ENCODE measurements at regions of chr5 and their contacts with region 1.

Region 1: DNA sequence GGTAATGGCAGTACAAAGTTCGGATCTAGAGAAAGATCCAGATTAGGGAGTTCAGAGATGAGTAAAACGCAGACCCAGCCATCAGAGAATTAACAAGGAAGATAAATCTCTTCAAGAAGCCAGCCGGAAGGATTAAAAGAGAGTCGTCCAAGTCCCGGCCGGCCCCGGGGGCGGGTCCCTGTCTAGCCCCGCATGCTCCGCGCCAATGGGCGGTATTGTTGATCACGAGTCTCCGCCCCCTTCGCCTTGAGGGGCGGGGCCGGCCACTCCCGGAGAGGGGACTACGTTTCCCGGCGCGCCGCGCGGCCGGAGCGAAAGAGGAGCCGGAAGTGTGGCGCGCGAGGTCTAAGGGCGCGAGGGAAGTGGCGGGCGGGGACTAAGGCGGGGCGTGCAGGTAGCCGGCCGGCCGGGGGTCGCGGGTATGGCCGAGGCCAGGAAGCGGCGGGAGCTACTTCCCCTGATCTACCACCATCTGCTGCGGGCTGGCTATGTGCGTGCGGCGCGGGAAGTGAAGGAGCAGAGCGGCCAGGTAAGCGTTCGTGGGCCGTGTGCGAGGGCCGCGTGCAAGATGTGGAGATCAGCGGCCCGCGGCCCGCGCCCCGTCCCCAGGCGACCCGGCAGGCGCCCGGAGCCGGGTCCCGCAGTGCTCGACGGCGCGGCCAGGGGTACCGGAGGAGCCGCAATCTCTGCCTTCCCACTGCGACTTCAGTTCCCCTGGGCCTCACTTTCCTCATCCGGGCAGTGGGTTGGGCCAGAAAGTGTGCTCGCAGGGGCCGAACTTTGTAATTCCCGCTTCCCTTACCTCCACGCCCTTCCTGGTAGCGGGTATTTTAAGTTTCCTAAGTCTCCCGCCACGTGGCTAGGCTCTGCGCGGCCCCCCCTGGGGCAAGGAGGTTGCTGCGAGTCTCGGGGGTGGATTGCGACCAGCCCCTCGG is at the start of gene TCOF1:
- DNase-seq: peak; percentile 96 to 99 (median 97)
- H3K4me3 ChIP-seq: peak within 1 kb of the TSS; percentile 74 to 99 (median 93)
- H3K27ac ChIP-seq: peak within 1 kb of the TSS in 52 of 59 donors; percentile 6 to 86 (median 66)
- H3K27me3 ChIP-seq: no peaks in the 10 kb centered on the region
- CTCF ChIP-seq: peak in 33 of 56 donors; percentile 10 to 63 (median 26)
- total RNA-seq, gene TCOF1: 26.4 to 51.1 (median 35.9) TPM

Region 2: DNA sequence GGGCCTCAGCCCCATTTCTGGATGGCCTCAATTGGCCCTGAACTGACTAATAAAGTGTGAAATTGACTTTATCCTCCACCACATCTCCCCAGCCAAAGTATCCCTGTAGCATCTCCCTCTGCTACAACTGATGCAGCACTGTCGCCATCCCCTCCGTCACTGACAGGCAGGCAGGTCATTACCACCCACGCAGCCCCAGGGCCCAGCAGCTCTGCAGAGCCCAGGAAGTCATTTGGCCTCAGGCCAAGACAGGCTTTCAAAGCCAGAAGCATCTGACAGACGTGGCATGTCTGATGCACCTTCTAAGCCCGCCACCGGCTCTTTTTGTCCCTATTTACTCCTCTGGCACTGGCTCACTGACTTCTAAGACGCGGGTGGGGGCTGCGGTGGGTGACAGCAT is 711.0 kb before region 1 on chr5:
- intact Hi-C with region 1: no loop called
- DNase-seq: peak in 1 of 10 donors; percentile 22
- H3K4me3 ChIP-seq: no peak overlapping the region
- H3K27ac ChIP-seq: no peak overlapping the region
- H3K27me3 ChIP-seq: no peaks in the 10 kb centered on the region
- CTCF ChIP-seq: no peak

Region 3: DNA sequence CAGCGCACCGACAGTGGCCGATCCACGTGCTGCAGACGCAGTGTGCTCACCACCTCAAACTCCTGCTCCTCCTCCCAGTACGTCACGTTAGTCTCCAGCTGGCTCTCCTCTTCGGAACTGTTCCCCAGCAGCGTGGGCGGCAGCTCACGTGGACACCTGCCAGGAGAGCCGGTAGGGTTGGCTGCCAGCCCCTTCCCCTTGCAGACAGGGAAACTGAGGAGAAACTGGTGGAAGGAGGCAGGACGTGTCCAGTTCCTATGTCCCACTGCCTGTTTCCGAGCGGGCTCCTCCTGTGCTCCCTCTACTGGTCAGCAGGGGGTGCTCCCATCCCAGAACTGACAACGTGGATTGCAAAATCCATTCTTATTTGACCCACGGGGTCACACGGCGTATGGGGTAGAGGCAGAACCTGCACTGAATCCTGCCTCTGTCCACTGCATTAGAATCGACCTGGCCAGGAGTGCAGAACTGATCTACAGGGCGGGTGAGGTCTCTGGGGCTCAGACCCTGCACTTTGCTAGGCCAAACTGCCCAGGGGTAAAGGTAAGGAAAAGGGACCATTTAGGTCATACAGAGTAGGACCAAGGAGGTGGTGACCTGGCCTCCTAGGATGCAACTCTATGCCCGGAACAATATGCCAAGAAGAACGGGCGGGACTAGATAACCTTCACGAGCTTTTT is 227.6 kb before region 1 on chr5:
- intact Hi-C with region 1: loop called (anchors 5 to 10 kb)
- DNase-seq: peak in 8 of 10 donors; percentile 39 to 79 (median 68)
- H3K4me3 ChIP-seq: peak overlapping the region in 30 of 59 donors; percentile 5 to 58 (median 29)
- H3K27ac ChIP-seq: peak overlapping the region in 26 of 59 donors; percentile 10 to 70 (median 47)
- H3K27me3 ChIP-seq: no peaks in the 10 kb centered on the region
- CTCF ChIP-seq: peak; percentile 75 to 97 (median 92)

Region 4: GRCh38 chr5:150694612-150695011 is 337.0 kb after region 1 on chr5:
- intact Hi-C with region 1: no loop called
- DNase-seq: no peak
- H3K4me3 ChIP-seq: no peak overlapping the region
- H3K27ac ChIP-seq: no peak overlapping the region
- H3K27me3 ChIP-seq: no peaks in the 10 kb centered on the region
- CTCF ChIP-seq: no peak

Measured in dorsolateral prefrontal cortex (tissue), 120 donors.